ENCODE measurements at regions of chr11 and their contacts with region 1.

Region 1: DNA sequence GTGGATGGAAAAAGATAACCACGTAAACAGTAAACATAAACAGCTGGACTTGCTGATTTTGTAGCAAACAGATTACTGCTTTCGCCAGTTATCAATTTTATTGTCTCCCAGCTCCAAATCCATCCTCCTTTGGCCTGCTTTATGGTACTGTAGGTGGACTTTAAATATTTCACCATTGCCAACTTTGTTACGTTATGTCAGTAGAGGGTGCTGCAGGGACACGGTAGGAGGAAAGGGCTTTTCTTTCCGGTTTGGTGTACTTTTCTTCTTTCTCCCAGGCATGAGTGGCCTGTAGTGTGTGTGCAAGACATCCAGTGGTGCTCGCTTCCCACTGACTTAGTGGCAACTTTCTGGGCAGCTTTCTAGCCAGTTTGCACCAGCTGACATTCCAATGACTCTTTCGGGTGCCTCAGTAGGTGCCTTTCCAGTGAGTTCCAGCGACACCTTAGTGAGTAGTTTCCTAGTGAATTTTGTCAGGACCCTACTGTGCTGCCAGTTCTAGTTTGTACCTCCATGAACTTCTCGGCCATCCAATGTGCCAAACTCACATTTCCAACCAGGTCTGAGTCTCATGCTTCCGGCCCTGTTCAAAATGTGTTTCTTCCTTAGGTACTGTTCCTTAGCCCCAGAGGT is 267.6 kb upstream of the TENM4 start:
- DNase-seq: peak; percentile 21
- CTCF ChIP-seq: peak; percentile 43

Region 2: GRCh38 chr11:79697905-79698304 is 10.5 kb before region 1 on chr11:
- CTCF ChIA-PET with region 1: interaction called, 12 read pairs
- POLR2A ChIA-PET with region 1: no interaction called
- DNase-seq: no peak
- CTCF ChIP-seq: no peak

Region 3: DNA sequence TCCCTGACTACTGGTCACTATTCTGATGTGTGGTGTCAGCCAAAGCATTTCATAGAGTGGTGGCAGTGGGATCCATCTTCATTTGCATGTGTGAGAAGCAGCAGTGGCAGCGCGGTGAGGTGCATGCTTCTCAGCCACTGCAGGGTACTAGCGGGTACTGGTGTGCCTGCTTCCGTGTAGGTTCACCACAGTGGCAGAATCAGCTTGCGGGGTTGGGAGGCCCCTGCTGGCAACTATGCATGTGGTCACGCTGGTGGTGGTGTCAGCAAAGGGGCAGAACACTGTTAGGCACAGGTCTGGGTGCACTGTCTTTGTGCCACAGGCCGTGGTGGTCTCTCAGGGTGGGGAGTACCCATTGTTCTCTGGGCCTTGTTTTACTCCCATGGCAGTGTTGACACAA is 18.8 kb after region 1 on chr11:
- CTCF ChIA-PET with region 1: no interaction called
- POLR2A ChIA-PET with region 1: no interaction called
- DNase-seq: no peak
- CTCF ChIP-seq: no peak

Region 4: GRCh38 chr11:80155412-80156017 is 447.1 kb after region 1 on chr11:
- CTCF ChIA-PET with region 1: interaction called, 11 read pairs
- POLR2A ChIA-PET with region 1: no interaction called
- DNase-seq: peak; percentile 6
- CTCF ChIP-seq: peak; percentile 31